Breast epithelium (tissue), 4 donors: ENCODE measurements at regions of chr1 and their contacts with region 1.

Region 1: DNA sequence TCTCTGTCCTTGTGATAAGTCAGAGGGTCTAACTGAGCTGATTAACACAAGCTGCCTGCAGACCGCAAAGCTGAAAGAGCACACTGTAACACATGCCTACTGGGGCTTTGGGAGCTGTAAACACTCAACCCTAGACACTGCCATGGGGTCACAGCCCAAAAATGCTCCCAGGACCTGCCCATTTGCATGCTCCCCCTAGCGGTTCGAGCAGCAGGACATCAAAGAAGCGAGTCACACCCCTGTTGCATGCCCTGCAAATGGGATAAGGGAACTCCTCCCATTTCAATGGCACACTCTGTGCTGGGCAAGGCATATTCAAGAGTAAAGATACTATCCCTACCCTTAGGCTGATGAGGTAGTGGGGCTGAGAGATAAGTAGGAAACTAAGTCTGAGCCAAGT is 22.8 kb downstream of the LCE3E start:
- DNase-seq: no peak
- H3K4me3 ChIP-seq: no peak overlapping the region
- H3K27ac ChIP-seq: no peak overlapping the region
- H3K4me1 ChIP-seq: no peaks in the 10 kb centered on the region
- H3K27me3 ChIP-seq: peaks cover 0 to 3% of the 10 kb centered on the region in 2 donors
- CTCF ChIP-seq: no peak
- POLR2A ChIP-seq: no peak

Region 2: DNA sequence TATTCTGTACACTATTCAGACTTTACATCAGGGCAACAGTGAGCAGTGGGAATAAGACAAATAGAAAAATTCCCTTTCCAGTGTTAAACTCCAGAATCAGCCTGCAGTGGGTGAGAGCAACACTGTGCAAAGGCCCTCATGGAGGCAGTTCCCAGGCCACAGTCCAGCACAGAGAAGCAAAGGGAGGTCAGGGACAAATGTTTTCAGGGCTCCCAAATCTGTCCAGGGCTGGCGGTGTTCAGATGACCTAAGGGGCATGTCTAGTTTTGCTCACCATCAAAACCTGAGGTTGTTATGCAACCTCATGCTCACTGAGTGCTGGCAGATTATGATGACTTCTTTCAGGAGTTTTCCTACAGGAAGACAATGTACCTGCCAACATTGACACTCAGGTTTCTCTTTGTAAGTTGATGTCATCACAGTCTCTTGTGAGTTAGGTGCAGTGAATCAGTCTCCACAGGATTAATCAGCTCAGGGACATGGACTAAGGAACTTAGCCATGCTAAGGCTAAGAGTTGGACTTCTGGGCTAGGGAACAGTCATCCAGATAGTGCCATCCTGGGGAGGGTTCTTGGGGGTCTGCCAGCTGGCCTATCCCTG is 36.8 kb before region 1 on chr1:
- intact Hi-C with region 1: loop called (anchors 2 kb)
- DNase-seq: no peak
- H3K4me3 ChIP-seq: no peak overlapping the region
- H3K27ac ChIP-seq: no peak overlapping the region
- H3K4me1 ChIP-seq: no peaks in the 10 kb centered on the region
- H3K27me3 ChIP-seq: peaks cover 0 to 17% of the 10 kb centered on the region in 2 donors
- CTCF ChIP-seq: no peak
- POLR2A ChIP-seq: no peak